Natural killer cell (primary cell): ENCODE measurements at regions of chr1 and their contacts with region 1.

Region 1: GRCh38 chr1:228102791-228103620 is at the start of gene C1orf35:
- DNase-seq: peak; percentile 93 to 97
- ATAC-seq: peak; percentile 84 to 90 (median 85)
- H3K4me3 ChIP-seq: peak within 1 kb of the TSS; percentile 96
- H3K4me3 Mint-ChIP-seq: peak within 1 kb of the TSS; percentile 94
- H3K27ac ChIP-seq: peak within 1 kb of the TSS; percentile 92
- H3K27ac Mint-ChIP-seq: peak within 1 kb of the TSS; percentile 93 to 96
- H3K4me1 ChIP-seq: peaks cover 35% of the 10 kb centered on the region
- H3K4me1 Mint-ChIP-seq: peaks cover 30 to 33% of the 10 kb centered on the region in 2 donors
- H3K27me3 ChIP-seq: no peaks in the 10 kb centered on the region
- H3K27me3 Mint-ChIP-seq: no peaks in the 10 kb centered on the region
- CTCF ChIP-seq: no peak
- total RNA-seq, gene C1orf35: 18.9 to 21.6 (median 19.6) TPM

Region 2: GRCh38 chr1:228082135-228082891 is 20.7 kb before region 1 on chr1 and contains the start of gene ARF1:
- intact Hi-C with region 1: loop called (anchors 2 kb)
- DNase-seq: peak; percentile 94 to 97
- ATAC-seq: peak; percentile 87 to 99 (median 91)
- H3K4me3 ChIP-seq: peak within 1 kb of the TSS; percentile 94
- H3K4me3 Mint-ChIP-seq: peak within 1 kb of the TSS; percentile 92
- H3K27ac ChIP-seq: peak within 1 kb of the TSS; percentile 97
- H3K27ac Mint-ChIP-seq: peak within 1 kb of the TSS; percentile 93 to 94
- H3K4me1 ChIP-seq: peaks cover 53% of the 10 kb centered on the region
- H3K4me1 Mint-ChIP-seq: peaks cover 38 to 63% of the 10 kb centered on the region in 2 donors
- H3K27me3 ChIP-seq: no peaks in the 10 kb centered on the region
- H3K27me3 Mint-ChIP-seq: no peaks in the 10 kb centered on the region
- CTCF ChIP-seq: no peak
- total RNA-seq, gene ARF1: 368 to 427 (median 424) TPM